Right ventricle myocardium superior (tissue), 1 donor: ENCODE measurements at regions of chr6 and their contacts with region 1.

Region 1: DNA sequence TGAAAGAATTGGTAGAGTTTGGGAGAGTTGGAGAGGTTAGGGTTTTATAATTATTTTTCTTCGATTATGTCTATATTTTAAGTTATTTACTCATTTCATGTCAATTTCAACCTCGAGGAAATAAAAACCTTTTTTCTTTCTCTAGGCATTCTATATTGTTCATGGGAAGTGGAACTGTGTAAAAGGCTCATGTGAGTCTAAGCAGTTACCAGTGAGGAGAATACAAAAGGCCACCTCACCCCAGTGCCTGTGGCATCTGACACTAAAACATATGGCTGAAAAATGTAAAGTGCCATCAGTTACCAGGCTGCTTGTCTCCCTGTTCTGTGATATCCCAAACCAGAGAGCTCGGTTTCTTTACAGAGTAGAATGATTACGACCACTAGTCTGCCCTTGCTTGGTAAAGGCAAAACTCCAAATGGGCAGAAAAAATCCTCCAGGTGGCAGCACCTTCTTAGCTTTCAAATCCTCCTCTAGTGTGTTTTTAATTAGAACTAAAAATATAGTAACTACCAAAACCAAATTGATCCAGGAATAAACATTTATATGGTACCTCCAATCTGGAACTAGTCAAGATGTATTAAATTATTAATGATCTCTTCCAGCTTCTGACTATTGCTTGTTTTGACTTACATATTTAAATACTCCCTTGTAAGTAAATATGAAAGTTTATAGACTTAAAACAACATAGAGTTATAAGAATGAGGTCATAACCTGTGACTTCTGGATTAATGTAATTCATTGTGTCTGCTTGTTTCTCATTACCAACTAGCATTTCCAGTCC is 122.6 kb upstream of the MCHR2 start:
- DNase-seq: no peak
- ATAC-seq: peak; percentile 58

Region 2: DNA sequence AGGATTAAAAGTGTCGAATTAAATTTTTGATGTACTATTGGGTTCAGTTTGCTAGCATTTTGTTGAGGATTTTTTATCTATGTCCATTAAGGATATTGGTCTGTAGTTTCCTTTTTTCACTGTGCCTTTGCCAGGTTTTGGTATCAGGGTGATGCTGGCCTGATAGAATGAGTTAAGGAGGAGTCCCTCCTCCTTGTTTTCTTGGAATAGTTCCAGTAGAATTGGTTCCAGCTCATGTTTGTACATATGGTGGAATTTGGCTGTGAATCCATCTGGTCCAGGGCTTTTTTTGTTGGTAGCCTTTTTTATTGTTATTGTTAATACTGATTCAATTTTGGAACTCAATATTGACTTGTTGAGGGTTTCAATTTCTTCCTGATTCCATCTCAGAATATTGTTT is 206.3 kb after region 1 on chr6:
- intact Hi-C with region 1: no loop called
- DNase-seq: no peak
- ATAC-seq: no peak

Region 3: GRCh38 chr6:100664274-100665040 is 547.9 kb after region 1 on chr6:
- intact Hi-C with region 1: loop called (anchors 10 kb)
- DNase-seq: no peak
- ATAC-seq: no peak